HAP-1 (cell line): ENCODE measurements at regions of chr22 and their contacts with region 1.

Region 1: GRCh38 chr22:23838681-23839468 is at the start of gene DERL3:
- DNase-seq: peak; percentile 99 to 100
- H3K4me3 ChIP-seq: peak within 1 kb of the TSS; percentile 42
- H3K4me1 ChIP-seq: peaks cover 7% of the 10 kb centered on the region
- H3K27me3 ChIP-seq: no peaks in the 10 kb centered on the region

Region 2: GRCh38 chr22:23772649-23773495 is 66.0 kb before region 1 on chr22 and contains the start of gene MMP11:
- in situ Hi-C with region 1: loop called (anchors 10 kb)
- DNase-seq: peak; percentile 56 to 85
- H3K4me3 ChIP-seq: peak within 1 kb of the TSS; percentile 34
- H3K4me1 ChIP-seq: peaks cover 16% of the 10 kb centered on the region
- H3K27me3 ChIP-seq: no peaks in the 10 kb centered on the region

Region 3: DNA sequence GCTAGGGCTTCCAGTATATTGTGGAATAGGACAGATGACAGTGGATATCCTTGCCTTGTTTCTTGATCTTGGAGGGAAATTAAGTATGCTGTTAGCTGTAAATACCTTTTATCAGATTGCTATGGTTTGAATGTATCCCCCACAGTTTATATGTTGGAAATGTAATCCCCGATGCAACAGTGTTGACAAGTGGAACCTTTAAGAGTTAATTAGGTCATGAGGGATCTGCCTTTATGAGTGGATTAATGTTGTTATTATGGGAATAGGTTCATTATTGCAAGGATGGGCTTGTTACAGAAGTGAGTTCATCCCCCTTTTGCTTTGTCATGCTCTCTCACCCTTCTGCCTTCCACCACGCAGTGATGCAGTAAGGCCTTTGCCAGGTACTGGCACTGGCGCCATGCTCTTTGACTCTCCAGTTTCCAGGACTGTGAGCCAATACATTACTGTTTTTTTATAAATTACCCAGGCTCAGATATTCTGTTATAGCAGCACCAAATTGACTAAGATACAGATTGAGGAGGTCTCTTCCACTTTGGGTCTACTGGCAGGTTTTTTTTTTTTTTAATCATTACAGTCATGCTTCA is 188.6 kb after region 1 on chr22:
- in situ Hi-C with region 1: no loop called
- DNase-seq: peak in 1 of 2 experiments; percentile 5
- H3K4me3 ChIP-seq: no peak overlapping the region
- H3K4me1 ChIP-seq: peaks cover 6% of the 10 kb centered on the region; the same call in 1 of the 2 replicates
- H3K27me3 ChIP-seq: no peaks in the 10 kb centered on the region